GM18951 (cell line): ENCODE measurements at regions of chr6 and their contacts with region 1.

Region 1: GRCh38 chr6:32570363-32570905 is 19.2 kb downstream of the HLA-DRB1 start:
- POLR2A ChIP-seq: no peak

Region 2: DNA sequence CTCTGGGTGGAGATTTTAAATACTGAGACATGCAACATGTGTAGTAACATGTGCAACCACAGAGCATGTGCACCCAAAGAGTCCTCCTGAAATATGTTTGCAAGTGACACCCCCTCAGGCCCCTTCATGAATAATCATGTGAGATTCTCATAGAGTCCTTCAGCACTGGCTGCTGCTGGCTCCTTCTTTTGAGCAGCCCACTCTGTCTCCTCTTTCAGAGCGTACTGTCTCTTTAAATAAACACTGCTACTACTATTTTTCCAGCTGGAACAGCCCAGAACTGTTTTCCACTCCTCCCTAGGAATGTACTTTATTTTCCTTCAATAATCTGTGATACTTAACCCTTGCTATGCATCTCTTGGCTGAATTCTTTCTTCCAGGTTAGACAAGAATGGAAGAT is 82.4 kb before region 1 on chr6:
- in situ Hi-C with region 1: loop called (anchors 5 kb)
- POLR2A ChIP-seq: no peak

Region 3: GRCh38 chr6:32752580-32752979 is 182.1 kb after region 1 on chr6:
- in situ Hi-C with region 1: no loop called
- POLR2A ChIP-seq: no peak